PC-9 (cell line): ENCODE measurements at regions of chr4 and their contacts with region 1.

Region 1: GRCh38 chr4:125314676-125315575 is at the start of gene FAT4:
- DNase-seq: peak; percentile 69 to 88
- H3K4me3 ChIP-seq: peak within 1 kb of the TSS; percentile 85
- H3K27ac ChIP-seq: no peak within 1 kb of the TSS
- H3K4me1 ChIP-seq: peaks cover 9% of the 10 kb centered on the region; the same call in 1 of the 2 replicates
- H3K27me3 ChIP-seq: 0 out of 2 replicates have a peak, but pooled peaks cover 12% of the 10 kb centered on the region
- CTCF ChIP-seq: no peak
- total RNA-seq, gene FAT4: 4.5 and 5.5 TPM in 2 replicates

Region 2: DNA sequence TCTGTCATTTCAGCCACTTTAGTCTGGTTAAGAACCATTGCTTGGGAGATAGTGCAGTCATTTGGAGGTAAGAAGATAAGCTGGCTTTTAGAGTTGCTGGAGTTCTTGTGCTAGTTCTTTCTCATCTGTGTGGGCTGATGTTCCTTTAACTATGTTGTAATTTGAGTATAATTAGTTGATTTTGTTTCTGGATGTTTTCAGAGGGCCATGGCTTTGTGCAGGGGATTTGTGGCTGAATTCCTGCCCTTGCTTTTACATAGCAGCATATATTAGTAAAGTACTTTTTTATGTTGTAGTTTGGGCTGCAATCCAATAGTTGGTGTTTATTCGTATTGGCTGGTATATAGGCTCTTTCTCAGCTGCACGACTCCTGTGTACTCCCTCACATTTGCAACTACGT is 942.0 kb before region 1 on chr4:
- CTCF ChIA-PET with region 1: no interaction called
- POLR2A ChIA-PET with region 1: no interaction called
- intact Hi-C with region 1: no loop called
- DNase-seq: no peak
- H3K4me3 ChIP-seq: no peak overlapping the region
- H3K27ac ChIP-seq: no peak overlapping the region
- H3K4me1 ChIP-seq: no peaks in the 10 kb centered on the region
- H3K27me3 ChIP-seq: no peaks in the 10 kb centered on the region
- CTCF ChIP-seq: no peak

Region 3: DNA sequence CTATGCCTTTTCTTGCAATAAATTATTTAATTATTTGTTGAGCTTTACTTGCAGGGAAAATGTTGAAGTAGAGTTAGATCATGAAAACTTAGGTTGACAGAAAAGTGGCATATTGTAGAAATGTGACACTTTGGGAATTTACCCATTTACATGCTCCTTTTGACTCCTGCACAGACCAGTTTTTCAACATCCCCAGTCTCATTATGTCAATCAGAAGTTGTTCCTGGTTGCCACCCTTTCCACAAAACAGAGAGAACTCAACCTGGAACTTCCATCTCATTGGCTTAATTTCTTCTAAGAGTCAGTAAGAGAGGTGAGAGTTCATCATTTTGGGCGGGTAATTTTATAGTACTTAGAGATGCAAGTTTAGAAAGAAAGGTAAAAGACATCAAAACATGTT is 317.8 kb before region 1 on chr4:
- CTCF ChIA-PET with region 1: no interaction called
- POLR2A ChIA-PET with region 1: no interaction called
- intact Hi-C with region 1: no loop called
- DNase-seq: no peak
- H3K4me3 ChIP-seq: no peak overlapping the region
- H3K27ac ChIP-seq: no peak overlapping the region
- H3K4me1 ChIP-seq: peaks cover 6% of the 10 kb centered on the region; the same call in 1 of the 2 replicates
- H3K27me3 ChIP-seq: no peaks in the 10 kb centered on the region
- CTCF ChIP-seq: no peak

Region 4: DNA sequence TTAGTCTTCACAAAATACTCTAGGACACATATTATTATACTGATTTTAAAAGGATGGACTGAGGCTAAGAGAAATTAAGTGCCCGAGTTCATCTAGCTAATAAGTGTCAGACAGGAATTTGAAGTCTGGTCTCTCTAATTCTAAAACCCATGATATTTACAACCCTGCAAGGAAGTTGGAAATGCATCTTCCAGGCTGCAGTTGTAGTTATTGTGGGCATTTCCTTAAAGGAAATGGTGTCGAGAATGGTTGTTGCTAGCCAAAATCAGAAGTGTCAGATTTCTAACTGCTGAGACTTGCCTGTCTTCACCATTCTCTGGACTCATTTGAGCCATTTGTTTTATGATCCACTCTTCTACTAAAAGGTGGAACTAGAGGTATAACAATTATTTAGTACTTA is 82.3 kb after region 1 on chr4:
- CTCF ChIA-PET with region 1: no interaction called
- POLR2A ChIA-PET with region 1: interaction called, 13 read pairs
- intact Hi-C with region 1: no loop called
- DNase-seq: no peak
- H3K4me3 ChIP-seq: no peak overlapping the region
- H3K27ac ChIP-seq: no peak overlapping the region
- H3K4me1 ChIP-seq: no peaks in the 10 kb centered on the region
- H3K27me3 ChIP-seq: no peaks in the 10 kb centered on the region
- CTCF ChIP-seq: no peak

Region 5: GRCh38 chr4:125735102-125735501 is 420.2 kb after region 1 on chr4:
- CTCF ChIA-PET with region 1: no interaction called
- POLR2A ChIA-PET with region 1: no interaction called
- intact Hi-C with region 1: loop called (anchors 2 kb)
- DNase-seq: peak; percentile 63 to 66
- H3K4me3 ChIP-seq: no peak overlapping the region
- H3K27ac ChIP-seq: no peak overlapping the region
- H3K4me1 ChIP-seq: 0 out of 2 replicates have a peak, but pooled peaks cover 4% of the 10 kb centered on the region
- H3K27me3 ChIP-seq: no peaks in the 10 kb centered on the region
- CTCF ChIP-seq: no peak

Region 6: DNA sequence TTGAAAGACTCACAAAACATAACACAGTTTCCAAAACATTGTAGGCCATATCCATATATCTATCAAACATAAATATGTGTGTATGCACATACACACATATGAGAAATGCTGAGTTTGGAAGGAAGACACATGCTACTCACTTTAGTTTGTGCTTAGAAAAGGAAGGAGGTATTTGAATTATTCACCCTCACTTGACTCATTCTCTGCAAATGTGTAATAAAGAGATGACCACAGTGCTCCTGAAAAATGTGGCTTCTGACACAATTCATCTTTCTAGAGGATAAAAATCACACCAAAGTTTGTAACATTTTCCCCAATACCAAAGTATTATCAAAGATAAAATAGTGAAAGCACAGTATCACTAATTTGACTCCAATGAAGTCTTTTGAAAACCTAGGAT is 949.9 kb after region 1 on chr4:
- CTCF ChIA-PET with region 1: no interaction called
- POLR2A ChIA-PET with region 1: no interaction called
- intact Hi-C with region 1: loop called (anchors 5 kb)
- DNase-seq: no peak
- H3K4me3 ChIP-seq: no peak overlapping the region
- H3K27ac ChIP-seq: no peak overlapping the region
- H3K4me1 ChIP-seq: no peaks in the 10 kb centered on the region
- H3K27me3 ChIP-seq: no peaks in the 10 kb centered on the region
- CTCF ChIP-seq: no peak

Region 7: GRCh38 chr4:126850286-126850685 is 1535.4 kb after region 1 on chr4:
- CTCF ChIA-PET with region 1: no interaction called
- POLR2A ChIA-PET with region 1: no interaction called
- intact Hi-C with region 1: loop called (anchors 10 kb)
- DNase-seq: peak; percentile 71 to 93
- H3K4me3 ChIP-seq: no peak overlapping the region
- H3K27ac ChIP-seq: peak overlapping the region; percentile 70
- H3K4me1 ChIP-seq: peaks cover 19% of the 10 kb centered on the region
- H3K27me3 ChIP-seq: no peaks in the 10 kb centered on the region
- CTCF ChIP-seq: no peak